ENCODE measurements at regions of chr1 and their contacts with region 1.

Region 1: GRCh38 chr1:113929750-113930498 is 800 bp downstream of the HIPK1 start:
- DNase-seq: no peak
- ATAC-seq: peak; percentile 68
- H3K4me3 ChIP-seq: peak overlapping the region; percentile 72 to 85
- H3K27ac ChIP-seq: peak overlapping the region; percentile 71
- H3K4me1 ChIP-seq: peaks cover 15% of the 10 kb centered on the region
- H3K27me3 ChIP-seq: no peaks in the 10 kb centered on the region
- CTCF ChIP-seq: peak; percentile 32

Region 2: GRCh38 chr1:113904674-113905434 is 25.1 kb before region 1 on chr1 and contains the starts of genes AP4B1 and DCLRE1B:
- CTCF ChIA-PET with region 1: no interaction called
- POLR2A ChIA-PET with region 1: interaction called, 3 read pairs
- in situ Hi-C with region 1: no loop called
- intact Hi-C with region 1: loop called (anchors 2 kb)
- DNase-seq: peak; percentile 96
- ATAC-seq: peak; percentile 97
- H3K4me3 ChIP-seq: peak within 1 kb of the TSS; percentile 84 to 93
- H3K27ac ChIP-seq: peak within 1 kb of the TSS; percentile 94
- H3K4me1 ChIP-seq: peaks cover 4% of the 10 kb centered on the region
- H3K27me3 ChIP-seq: no peaks in the 10 kb centered on the region
- CTCF ChIP-seq: peak; percentile 75
- total RNA-seq, gene AP4B1: 14.2 TPM
- total RNA-seq, gene DCLRE1B: 8.6 TPM

Region 3: GRCh38 chr1:113963281-113963906 is 33.5 kb after region 1 on chr1:
- CTCF ChIA-PET with region 1: interaction called, 12 read pairs
- POLR2A ChIA-PET with region 1: no interaction called
- in situ Hi-C with region 1: no loop called
- intact Hi-C with region 1: no loop called
- DNase-seq: no peak
- ATAC-seq: no peak
- H3K4me3 ChIP-seq: no peak overlapping the region
- H3K27ac ChIP-seq: no peak overlapping the region
- H3K4me1 ChIP-seq: no peaks in the 10 kb centered on the region
- H3K27me3 ChIP-seq: no peaks in the 10 kb centered on the region
- CTCF ChIP-seq: 0 out of 2 replicates have a peak, but pooled peaks have one; percentile 21

Region 4: GRCh38 chr1:114446198-114446597 is 516.3 kb after region 1 on chr1:
- CTCF ChIA-PET with region 1: no interaction called
- POLR2A ChIA-PET with region 1: interaction called, 11 read pairs
- in situ Hi-C with region 1: no loop called
- intact Hi-C with region 1: no loop called
- DNase-seq: no peak
- ATAC-seq: no peak
- H3K4me3 ChIP-seq: no peak overlapping the region
- H3K27ac ChIP-seq: no peak overlapping the region
- H3K4me1 ChIP-seq: no peaks in the 10 kb centered on the region
- H3K27me3 ChIP-seq: no peaks in the 10 kb centered on the region
- CTCF ChIP-seq: no peak

Measured in Panc1 (cell line).